PC-9 (cell line): ENCODE measurements at regions of chr17 and their contacts with region 1.

Region 1: DNA sequence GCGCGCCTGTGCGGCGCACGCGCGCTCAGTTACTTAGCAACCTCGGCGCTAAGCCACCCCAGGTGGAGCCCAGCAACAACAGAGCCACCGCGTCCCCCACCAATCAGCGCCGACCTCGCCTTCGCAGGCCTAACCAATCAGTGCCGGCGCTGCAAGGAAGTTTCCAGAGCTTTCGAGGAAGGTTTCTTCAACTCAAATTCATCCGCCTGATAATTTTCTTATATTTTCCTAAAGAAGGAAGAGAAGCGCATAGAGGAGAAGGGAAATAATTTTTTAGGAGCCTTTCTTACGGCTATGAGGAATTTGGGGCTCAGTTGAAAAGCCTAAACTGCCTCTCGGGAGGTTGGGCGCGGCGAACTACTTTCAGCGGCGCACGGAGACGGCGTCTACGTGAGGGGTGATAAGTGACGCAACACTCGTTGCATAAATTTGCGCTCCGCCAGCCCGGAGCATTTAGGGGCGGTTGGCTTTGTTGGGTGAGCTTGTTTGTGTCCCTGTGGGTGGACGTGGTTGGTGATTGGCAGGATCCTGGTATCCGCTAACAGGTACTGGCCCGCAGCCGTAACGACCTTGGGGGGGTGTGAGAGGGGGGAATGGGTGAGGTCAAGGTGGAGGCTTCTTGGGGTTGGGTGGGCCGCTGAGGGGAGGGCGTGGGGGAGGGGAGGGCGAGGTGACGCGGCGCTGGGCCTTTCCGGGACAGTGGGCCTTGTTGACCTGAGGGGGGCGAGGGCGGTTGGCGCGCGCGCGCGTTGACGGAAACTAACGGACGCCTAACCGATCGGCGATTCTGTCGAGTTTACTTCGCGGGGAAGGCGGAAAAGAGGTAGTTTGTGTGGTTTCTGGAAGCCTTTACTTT is at the start of gene UBB:
- DNase-seq: peak; percentile 90 to 97
- H3K4me3 ChIP-seq: peak within 1 kb of the TSS; percentile 97
- H3K27ac ChIP-seq: peak within 1 kb of the TSS; percentile 87
- H3K4me1 ChIP-seq: peaks cover 31% of the 10 kb centered on the region
- H3K27me3 ChIP-seq: no peaks in the 10 kb centered on the region
- CTCF ChIP-seq: no peak
- total RNA-seq, gene UBB: 2,044 and 2,361 TPM in 2 replicates

Region 2: DNA sequence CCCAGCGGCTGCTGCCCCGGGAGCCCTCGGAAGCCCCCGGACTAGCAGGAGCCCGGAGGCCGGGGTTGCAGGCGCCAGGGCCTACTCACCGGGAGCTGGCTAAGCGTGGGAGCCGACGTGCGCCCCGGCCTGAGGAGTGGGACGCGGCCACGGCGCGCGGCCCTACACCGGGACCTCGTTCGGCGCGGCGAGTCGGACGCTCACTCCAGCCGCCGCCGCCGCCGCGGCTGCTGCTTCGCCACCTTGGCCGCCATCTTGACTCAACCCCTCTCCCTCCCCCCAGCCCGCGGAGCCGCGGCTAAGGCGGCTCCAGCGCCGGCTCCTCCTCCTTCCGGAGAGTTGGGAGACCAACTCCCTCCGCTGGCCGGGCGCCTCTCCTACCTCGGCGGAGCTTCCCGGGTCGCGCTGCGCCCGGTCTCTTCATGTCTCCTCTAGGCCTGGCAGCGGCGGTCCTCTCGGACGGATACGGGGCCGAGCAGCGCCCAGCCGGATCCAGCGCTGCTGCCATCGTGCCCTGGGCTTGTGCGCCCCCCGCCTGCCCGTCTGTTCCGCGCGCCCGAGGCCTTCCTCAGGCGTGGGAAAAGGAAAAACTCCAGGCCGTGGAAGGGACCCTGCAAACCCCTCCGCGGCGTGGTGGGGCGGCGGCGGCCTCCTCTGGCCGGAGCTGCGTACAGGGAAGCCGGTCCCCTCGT is 165.4 kb before region 1 on chr17 and contains the start of gene NCOR1:
- CTCF ChIA-PET with region 1: no interaction called
- POLR2A ChIA-PET with region 1: interaction called, 4 read pairs
- intact Hi-C with region 1: loop called (anchors 2 kb)
- DNase-seq: peak; percentile 73 to 93
- H3K4me3 ChIP-seq: peak within 1 kb of the TSS; percentile 92
- H3K27ac ChIP-seq: peak within 1 kb of the TSS; percentile 90
- H3K4me1 ChIP-seq: peaks cover 23% of the 10 kb centered on the region
- H3K27me3 ChIP-seq: no peaks in the 10 kb centered on the region
- CTCF ChIP-seq: no peak; the same call in 1 of the 2 replicates
- total RNA-seq, gene NCOR1: 139 and 171 TPM in 2 replicates

Region 3: DNA sequence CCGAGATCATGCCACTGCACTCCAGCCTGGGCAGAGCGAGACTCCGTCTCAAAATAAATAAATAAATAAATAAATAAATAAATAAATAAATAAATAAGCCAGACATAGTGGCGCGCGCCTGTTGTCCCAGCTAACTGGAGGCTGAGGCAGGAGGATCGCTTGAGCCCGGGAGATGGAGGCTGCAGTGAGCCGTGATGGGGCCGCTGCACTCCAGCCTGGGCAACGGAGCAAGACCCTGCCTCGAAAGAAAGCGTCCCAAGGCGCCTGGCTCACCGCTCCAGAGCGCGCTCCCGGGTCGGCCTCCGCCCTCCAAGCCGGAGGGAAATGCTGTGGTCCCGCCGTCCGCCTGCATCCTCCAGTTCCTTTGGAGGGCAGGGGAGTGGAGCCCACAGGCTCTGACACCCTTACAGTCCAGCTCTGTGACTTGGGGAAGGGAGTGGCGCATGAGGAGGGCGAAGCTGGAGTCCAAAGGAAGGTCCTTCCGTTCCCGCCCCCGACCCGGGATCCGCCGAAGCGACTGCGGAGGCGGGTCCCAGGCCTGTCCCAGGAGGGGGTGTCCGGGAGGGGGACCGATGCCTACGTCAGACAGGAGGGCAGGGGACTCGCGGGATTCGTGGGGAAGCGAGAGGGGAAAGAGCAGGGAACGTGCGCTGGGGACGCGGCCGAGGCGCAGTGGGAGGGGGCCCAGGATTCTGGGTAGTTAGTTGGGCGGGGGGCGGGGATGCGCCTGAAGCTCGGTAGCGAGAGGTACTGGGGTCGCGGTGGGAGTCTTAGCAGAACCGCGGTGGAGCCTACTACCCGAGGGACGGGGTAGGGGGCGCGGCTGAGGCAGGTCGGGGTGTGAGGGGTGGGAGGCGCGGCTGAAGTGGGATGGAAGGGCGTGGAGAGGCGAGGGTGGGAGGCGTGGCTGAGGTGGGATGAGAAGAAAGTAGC is 26.1 kb after region 1 on chr17:
- CTCF ChIA-PET with region 1: no interaction called
- POLR2A ChIA-PET with region 1: interaction called, 17 read pairs
- intact Hi-C with region 1: no loop called
- DNase-seq: peak in 1 of 2 experiments; percentile 27
- H3K4me3 ChIP-seq: peak overlapping the region; percentile 31; the same call in 1 of the 2 replicates
- H3K27ac ChIP-seq: no peak overlapping the region
- H3K4me1 ChIP-seq: no peaks in the 10 kb centered on the region
- H3K27me3 ChIP-seq: no peaks in the 10 kb centered on the region
- CTCF ChIP-seq: no peak

Region 4: GRCh38 chr17:16438557-16439302 is 57.9 kb after region 1 on chr17:
- CTCF ChIA-PET with region 1: interaction called, 7 read pairs
- POLR2A ChIA-PET with region 1: interaction called, 17 read pairs
- intact Hi-C with region 1: loop called (anchors 1 kb)
- DNase-seq: peak; percentile 94 to 99
- H3K4me3 ChIP-seq: peak overlapping the region; percentile 98
- H3K27ac ChIP-seq: peak overlapping the region; percentile 88
- H3K4me1 ChIP-seq: peaks cover 20% of the 10 kb centered on the region
- H3K27me3 ChIP-seq: no peaks in the 10 kb centered on the region
- CTCF ChIP-seq: no peak

Region 5: GRCh38 chr17:16513873-16514272 is 133.0 kb after region 1 on chr17:
- CTCF ChIA-PET with region 1: no interaction called
- POLR2A ChIA-PET with region 1: no interaction called
- intact Hi-C with region 1: no loop called
- DNase-seq: no peak
- H3K4me3 ChIP-seq: no peak overlapping the region
- H3K27ac ChIP-seq: no peak overlapping the region
- H3K4me1 ChIP-seq: peaks cover 10% of the 10 kb centered on the region
- H3K27me3 ChIP-seq: no peaks in the 10 kb centered on the region
- CTCF ChIP-seq: no peak

Region 6: GRCh38 chr17:16537130-16537458 is 156.2 kb after region 1 on chr17:
- CTCF ChIA-PET with region 1: no interaction called
- POLR2A ChIA-PET with region 1: interaction called, 3 read pairs
- intact Hi-C with region 1: loop called (anchors 1 kb)
- DNase-seq: no peak
- H3K4me3 ChIP-seq: no peak overlapping the region; the same call in 1 of the 2 replicates
- H3K27ac ChIP-seq: no peak overlapping the region
- H3K4me1 ChIP-seq: no peaks in the 10 kb centered on the region
- H3K27me3 ChIP-seq: no peaks in the 10 kb centered on the region
- CTCF ChIP-seq: 0 out of 2 replicates have a peak, but pooled peaks have one; percentile 7